Heart left ventricle (tissue), 16 donors: ENCODE measurements at regions of chr2 and their contacts with region 1.

Region 1: GRCh38 chr2:197113275-197113711 is 186.8 kb upstream of the PGAP1 start:
- DNase-seq: no peak
- ATAC-seq: no peak
- H3K4me3 ChIP-seq: no peak overlapping the region
- H3K27ac ChIP-seq: peak overlapping the region in 1 of 12 donors; percentile 24
- H3K4me1 ChIP-seq: peaks cover 0 to 23% (median 11%) of the 10 kb centered on the region in 12 donors
- H3K27me3 ChIP-seq: no peaks in the 10 kb centered on the region
- CTCF ChIP-seq: peak; percentile 47 to 78 (median 70)
- POLR2A ChIP-seq: no peak

Region 2: DNA sequence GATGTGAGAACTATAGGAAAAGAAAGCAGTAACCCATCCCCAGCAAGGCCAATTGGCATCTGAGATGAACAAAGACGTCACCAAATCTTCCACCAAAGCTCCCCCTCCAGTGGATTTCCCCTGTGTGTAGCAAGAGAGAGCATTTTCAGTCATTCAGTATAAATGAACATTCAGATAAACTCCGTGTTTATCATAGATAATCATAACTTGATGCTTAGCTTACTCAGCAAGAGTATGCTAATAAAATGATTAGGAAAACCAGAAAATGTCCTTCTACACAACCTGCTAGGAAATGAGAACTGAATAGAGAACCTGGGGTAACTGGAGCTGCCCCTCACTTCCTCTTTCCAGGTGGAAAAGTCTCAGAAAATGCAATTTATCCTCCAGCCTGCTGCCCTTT is 671.8 kb before region 1 on chr2:
- intact Hi-C with region 1: no loop called
- DNase-seq: no peak
- ATAC-seq: no peak
- H3K4me3 ChIP-seq: no peak overlapping the region
- H3K27ac ChIP-seq: no peak overlapping the region
- H3K4me1 ChIP-seq: peaks cover 0 to 6% (median 0%) of the 10 kb centered on the region in 12 donors
- H3K27me3 ChIP-seq: no peaks in the 10 kb centered on the region
- CTCF ChIP-seq: no peak
- POLR2A ChIP-seq: no peak

Region 3: GRCh38 chr2:197011799-197012641 is 101.3 kb before region 1 on chr2:
- intact Hi-C with region 1: loop called in 5 of 10 experiments (anchors 2 to 10 kb)
- DNase-seq: peak in 1 of 5 donors; percentile 22
- ATAC-seq: peak in 3 of 4 donors; percentile 66 to 73 (median 72)
- H3K4me3 ChIP-seq: no peak overlapping the region
- H3K27ac ChIP-seq: no peak overlapping the region
- H3K4me1 ChIP-seq: peaks cover 0 to 9% (median 0%) of the 10 kb centered on the region in 12 donors
- H3K27me3 ChIP-seq: no peaks in the 10 kb centered on the region
- CTCF ChIP-seq: peak; percentile 64 to 91 (median 82)
- POLR2A ChIP-seq: no peak

Region 4: DNA sequence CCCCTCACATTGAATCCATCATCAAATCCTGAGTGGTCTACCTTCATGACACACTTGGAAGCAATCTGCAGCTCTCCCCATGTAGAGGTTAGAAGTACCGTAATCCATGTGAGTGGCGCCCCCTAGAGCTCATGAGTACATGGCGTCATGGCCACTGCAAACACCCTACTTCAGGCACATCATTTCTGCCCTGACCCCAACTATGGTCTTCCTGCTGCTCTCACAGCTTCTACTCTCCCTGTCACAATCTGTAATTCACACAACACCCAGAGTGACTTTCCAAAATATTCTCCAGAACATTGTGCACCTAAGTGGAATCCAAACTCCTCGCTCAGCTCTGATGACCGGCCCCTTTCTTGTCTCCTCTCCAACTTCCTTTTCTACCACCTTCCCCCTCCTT is 55.4 kb after region 1 on chr2:
- intact Hi-C with region 1: loop called in 4 of 10 experiments (anchors 5 to 10 kb)
- DNase-seq: peak; percentile 36 to 68 (median 53)
- ATAC-seq: peak in 3 of 4 donors; percentile 61 to 83 (median 69)
- H3K4me3 ChIP-seq: no peak overlapping the region
- H3K27ac ChIP-seq: no peak overlapping the region
- H3K4me1 ChIP-seq: peaks cover 0 to 32% (median 4%) of the 10 kb centered on the region in 12 donors
- H3K27me3 ChIP-seq: no peaks in the 10 kb centered on the region
- CTCF ChIP-seq: peak; percentile 26 to 59 (median 43)
- POLR2A ChIP-seq: no peak

Region 5: DNA sequence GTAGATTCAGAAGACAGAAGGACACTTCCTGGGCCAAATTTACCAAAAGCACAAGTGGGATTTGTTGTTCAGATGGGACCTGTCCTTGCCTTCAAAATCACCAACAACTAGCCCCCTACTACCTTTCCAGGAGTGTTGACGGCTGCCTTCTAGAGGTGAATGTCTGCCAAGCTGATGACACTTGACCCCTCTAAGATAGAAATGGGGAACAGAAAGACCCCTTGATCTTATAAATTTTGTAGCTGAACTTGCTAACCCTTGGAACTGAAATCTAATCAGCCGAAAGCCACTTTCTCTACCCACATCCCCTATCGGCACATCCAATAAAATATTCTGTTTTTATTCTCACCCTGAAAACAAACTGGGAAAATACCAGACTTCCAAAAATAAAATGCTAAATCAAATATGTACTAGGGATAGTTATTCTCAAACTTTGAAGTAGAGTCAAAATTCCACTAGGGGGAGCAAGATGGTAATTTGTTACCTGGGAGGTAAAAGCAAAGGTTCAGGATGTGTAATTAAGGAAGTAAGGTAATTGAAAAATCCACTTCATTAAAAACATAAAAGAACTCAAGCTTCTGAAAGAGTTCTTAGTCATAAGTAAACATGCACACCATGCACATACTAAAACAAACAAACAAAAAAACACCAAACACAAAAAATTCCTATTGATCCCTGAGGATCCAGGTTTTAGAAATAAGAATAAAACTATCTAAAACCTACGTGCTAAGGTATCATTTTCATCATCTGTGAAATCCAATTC is 78.1 kb after region 1 on chr2:
- intact Hi-C with region 1: loop called in 4 of 10 experiments (anchors 5 kb)
- DNase-seq: no peak
- ATAC-seq: no peak
- H3K4me3 ChIP-seq: no peak overlapping the region
- H3K27ac ChIP-seq: peak overlapping the region in 1 of 12 donors; percentile 18
- H3K4me1 ChIP-seq: peaks cover 0 to 24% (median 11%) of the 10 kb centered on the region in 12 donors
- H3K27me3 ChIP-seq: no peaks in the 10 kb centered on the region
- CTCF ChIP-seq: peak; percentile 55 to 80 (median 72)
- POLR2A ChIP-seq: no peak

Region 6: DNA sequence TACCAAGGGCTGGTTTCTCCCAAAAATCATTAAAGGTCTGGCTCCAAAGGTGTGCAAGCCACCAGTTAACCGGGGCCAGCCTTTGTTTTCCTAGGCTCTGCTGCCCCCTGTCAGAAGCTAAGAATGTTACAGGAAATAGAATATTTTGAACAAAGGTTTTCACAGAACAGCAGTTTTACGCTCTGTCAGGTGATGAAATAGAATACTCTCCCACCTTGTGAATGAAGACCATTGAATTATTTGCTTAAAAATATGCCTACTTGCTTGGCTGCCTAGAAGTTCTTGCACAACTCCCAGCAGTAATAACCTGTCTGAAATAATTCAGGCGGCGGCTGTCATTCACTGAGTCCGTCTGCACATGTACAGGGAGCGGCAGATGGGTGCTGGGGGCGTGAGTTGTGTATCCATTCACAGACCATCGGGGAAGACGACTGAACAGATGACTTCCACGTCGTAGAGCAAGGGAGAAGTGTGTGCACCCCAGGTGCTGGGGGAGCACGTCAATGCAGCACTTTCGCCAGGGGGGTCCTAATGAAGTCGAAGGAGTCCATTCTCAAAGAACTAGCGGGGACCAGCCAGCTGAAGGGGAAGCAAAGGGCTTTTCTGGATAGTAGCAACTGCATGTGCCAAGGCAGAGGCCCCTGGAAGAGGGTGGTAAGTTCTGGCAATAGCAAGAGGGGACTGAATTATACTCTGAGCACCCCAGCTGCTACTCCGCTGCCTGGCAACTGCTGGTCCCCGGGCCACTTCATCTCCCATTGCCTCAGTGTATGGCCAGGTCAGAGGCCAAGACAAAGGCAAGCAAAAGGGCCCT is 265.4 kb after region 1 on chr2:
- intact Hi-C with region 1: loop called (anchors 1 to 5 kb)
- DNase-seq: peak in 2 of 5 donors; percentile 18 to 45
- ATAC-seq: peak in 3 of 4 donors; percentile 33 to 76 (median 53)
- H3K4me3 ChIP-seq: no peak overlapping the region
- H3K27ac ChIP-seq: no peak overlapping the region
- H3K4me1 ChIP-seq: peaks cover 0 to 4% (median 0%) of the 10 kb centered on the region in 12 donors
- H3K27me3 ChIP-seq: no peaks in the 10 kb centered on the region
- CTCF ChIP-seq: peak; percentile 62 to 87 (median 77)
- POLR2A ChIP-seq: no peak